SK-N-SH (cell line): ENCODE measurements at regions of chr22 and their contacts with region 1.

Region 1: DNA sequence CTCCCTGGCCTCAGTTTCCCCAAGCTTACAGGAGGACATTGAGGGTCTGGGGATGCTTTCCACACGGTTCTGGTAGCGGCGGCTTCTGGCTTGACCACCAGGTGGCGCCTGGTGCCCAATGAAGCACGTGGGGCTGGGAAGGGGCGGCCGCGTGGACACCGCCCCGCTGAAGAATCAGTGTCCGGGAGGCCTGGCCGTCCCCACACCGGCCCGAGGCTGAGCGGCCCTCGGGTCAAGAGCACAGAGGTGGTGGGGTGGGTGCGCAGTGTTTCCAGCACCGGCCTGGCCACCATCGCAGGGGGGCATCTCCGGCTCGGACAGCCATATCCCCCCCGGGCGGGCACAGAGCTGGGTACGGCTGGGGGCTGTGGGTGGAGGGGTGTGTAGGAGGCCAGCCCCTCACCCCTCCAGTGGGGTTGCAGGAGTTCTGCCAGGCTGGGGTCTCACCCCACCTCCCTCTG is 27.8 kb upstream of the PPARA start:
- DNase-seq: peak; percentile 95
- H3K4me3 ChIP-seq: no peak overlapping the region; a peak in 2 of 4 replicates
- H3K27ac ChIP-seq: no peak overlapping the region
- H3K4me1 ChIP-seq: peaks cover 0 to 29% of the 10 kb centered on the region in 2 experiments; a peak in 1 of 4 replicates
- H3K27me3 ChIP-seq: no peaks in the 10 kb centered on the region
- CTCF ChIP-seq: peak; percentile 91
- EP300 ChIP-seq: no peak
- RAD21 ChIP-seq: peak; percentile 88

Region 2: DNA sequence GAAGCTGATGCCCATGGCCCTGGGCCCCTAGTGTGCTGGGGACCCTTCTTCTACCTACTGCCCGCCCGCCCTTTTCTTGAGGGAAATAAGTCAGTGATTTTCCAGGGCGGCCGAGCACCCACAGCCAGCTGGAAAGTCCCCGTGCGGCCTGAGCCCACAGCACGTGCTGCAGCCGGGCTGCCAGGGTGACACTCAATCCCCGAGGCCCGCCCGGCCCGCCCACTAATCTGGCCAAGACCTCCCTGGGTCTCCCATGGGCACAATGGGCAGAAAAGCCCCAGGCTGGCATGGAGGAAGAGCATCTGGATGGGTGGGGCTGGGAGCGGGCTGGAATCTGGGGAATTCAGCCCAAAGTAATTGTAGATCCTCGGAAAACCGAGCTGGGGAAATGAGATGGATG is 170.4 kb before region 1 on chr22:
- CTCF ChIA-PET with region 1: no interaction called
- POLR2A ChIA-PET with region 1: no interaction called
- DNase-seq: no peak
- H3K4me3 ChIP-seq: no peak overlapping the region
- H3K27ac ChIP-seq: no peak overlapping the region
- H3K4me1 ChIP-seq: no peaks in the 10 kb centered on the region
- H3K27me3 ChIP-seq: peaks cover 8% of the 10 kb centered on the region; the same call in 1 of the 2 replicates
- CTCF ChIP-seq: no peak
- EP300 ChIP-seq: no peak
- RAD21 ChIP-seq: no peak

Region 3: GRCh38 chr22:45994491-45995404 is 127.8 kb before region 1 on chr22:
- CTCF ChIA-PET with region 1: interaction called, 107 read pairs
- POLR2A ChIA-PET with region 1: no interaction called
- DNase-seq: peak; percentile 88
- H3K4me3 ChIP-seq: no peak overlapping the region
- H3K27ac ChIP-seq: peak overlapping the region; percentile 96 to 97; a peak in 3 of 4 replicates
- H3K4me1 ChIP-seq: peaks cover 30 to 53% of the 10 kb centered on the region in 2 experiments
- H3K27me3 ChIP-seq: no peaks in the 10 kb centered on the region
- CTCF ChIP-seq: peak; percentile 88
- EP300 ChIP-seq: no peak
- RAD21 ChIP-seq: peak; percentile 95

Region 4: GRCh38 chr22:46250035-46250782 is 127.7 kb after region 1 on chr22 and contains the start of gene CDPF1:
- CTCF ChIA-PET with region 1: interaction called, 10 read pairs
- POLR2A ChIA-PET with region 1: no interaction called
- DNase-seq: peak; percentile 98
- H3K4me3 ChIP-seq: peak within 1 kb of the TSS; percentile 91 to 93
- H3K27ac ChIP-seq: peak within 1 kb of the TSS; percentile 64 to 92
- H3K4me1 ChIP-seq: peaks cover 0 to 48% of the 10 kb centered on the region in 2 experiments; a peak in 3 of 4 replicates
- H3K27me3 ChIP-seq: no peaks in the 10 kb centered on the region
- CTCF ChIP-seq: no peak
- EP300 ChIP-seq: no peak
- RAD21 ChIP-seq: no peak; the same call in 1 of the 2 replicates
- polyA plus RNA-seq, gene CDPF1: 25.3 and 29.0 TPM in 2 replicates

Region 5: GRCh38 chr22:46303347-46303965 is 180.9 kb after region 1 on chr22:
- CTCF ChIA-PET with region 1: interaction called, 66 read pairs
- POLR2A ChIA-PET with region 1: no interaction called
- DNase-seq: no peak
- H3K4me3 ChIP-seq: no peak overlapping the region
- H3K27ac ChIP-seq: peak overlapping the region in 1 of 2 experiments; percentile 50; a peak in 2 of 4 replicates
- H3K4me1 ChIP-seq: peaks cover 2 to 10% of the 10 kb centered on the region in 2 experiments; a peak in 1 of 4 replicates
- H3K27me3 ChIP-seq: no peaks in the 10 kb centered on the region
- CTCF ChIP-seq: no peak
- EP300 ChIP-seq: no peak
- RAD21 ChIP-seq: no peak

Region 6: GRCh38 chr22:46317646-46318045 is 195.1 kb after region 1 on chr22:
- CTCF ChIA-PET with region 1: interaction called, 69 read pairs
- POLR2A ChIA-PET with region 1: no interaction called
- DNase-seq: no peak
- H3K4me3 ChIP-seq: no peak overlapping the region
- H3K27ac ChIP-seq: no peak overlapping the region
- H3K4me1 ChIP-seq: no peaks in the 10 kb centered on the region; a peak in 1 of 4 replicates
- H3K27me3 ChIP-seq: no peaks in the 10 kb centered on the region
- CTCF ChIP-seq: no peak
- EP300 ChIP-seq: no peak
- RAD21 ChIP-seq: no peak

Region 7: DNA sequence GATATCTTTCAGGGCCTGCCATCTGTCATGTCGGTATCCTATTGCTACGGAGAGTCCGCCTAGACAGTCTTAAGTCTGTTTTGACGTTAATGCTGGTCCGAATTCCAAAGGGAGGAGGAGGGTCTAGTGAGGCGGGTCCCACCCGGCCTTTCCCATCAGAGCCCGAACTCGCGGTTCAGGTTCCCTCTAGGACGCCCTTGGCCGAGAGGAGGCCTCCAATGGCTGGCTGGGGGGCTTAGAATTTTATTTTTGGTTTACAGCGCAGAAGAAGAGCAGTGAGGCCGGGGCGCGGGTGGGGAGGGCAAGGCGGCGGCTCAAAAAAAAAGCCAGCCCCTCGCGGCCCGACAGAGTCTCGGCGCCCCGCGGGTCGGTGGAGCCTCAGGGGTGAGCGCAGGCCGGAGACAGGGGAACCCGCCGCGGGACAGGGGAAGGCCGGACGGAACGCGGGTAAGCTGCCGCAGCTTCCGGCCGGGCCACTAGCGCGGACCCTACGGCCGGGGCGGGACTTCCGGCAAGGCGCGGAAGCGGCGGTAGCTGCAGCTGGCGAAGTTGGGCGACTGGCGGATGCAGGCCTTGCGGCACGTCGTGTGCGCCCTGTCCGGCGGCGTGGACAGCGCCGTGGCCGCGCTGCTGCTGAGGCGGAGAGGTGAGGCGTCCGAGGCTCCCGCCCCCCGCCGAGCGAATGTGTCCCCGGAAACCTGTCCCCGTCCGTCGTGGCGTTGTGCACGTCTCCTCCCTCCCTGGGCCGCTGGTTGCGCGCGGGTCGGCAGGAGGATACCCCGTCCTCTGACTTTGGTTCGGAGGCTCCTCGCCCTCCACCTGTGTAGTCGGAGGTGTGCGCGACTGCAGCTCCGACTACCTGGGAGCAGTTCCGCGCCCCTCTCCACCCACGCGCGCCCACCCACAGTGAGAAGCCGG is 212.9 kb after region 1 on chr22 and contains the start of gene TRMU:
- CTCF ChIA-PET with region 1: interaction called, 11 read pairs
- POLR2A ChIA-PET with region 1: no interaction called
- DNase-seq: peak; percentile 98
- H3K4me3 ChIP-seq: peak within 1 kb of the TSS; percentile 95 to 96
- H3K27ac ChIP-seq: peak within 1 kb of the TSS; percentile 80 to 87
- H3K4me1 ChIP-seq: peaks cover 6 to 15% of the 10 kb centered on the region in 2 experiments; a peak in 3 of 4 replicates
- H3K27me3 ChIP-seq: no peaks in the 10 kb centered on the region
- CTCF ChIP-seq: no peak
- EP300 ChIP-seq: no peak; a peak in 1 of 4 replicates
- RAD21 ChIP-seq: no peak
- polyA plus RNA-seq, gene TRMU: 47.1 and 47.4 TPM in 2 replicates